Posterior cingulate gyrus (tissue), 11 donors: ENCODE measurements at regions of chr16 and their contacts with region 1.

Region 1: GRCh38 chr16:4766874-4767628 is at the start of gene ZNF500:
- DNase-seq: peak; percentile 97 to 100 (median 99)

Region 2: DNA sequence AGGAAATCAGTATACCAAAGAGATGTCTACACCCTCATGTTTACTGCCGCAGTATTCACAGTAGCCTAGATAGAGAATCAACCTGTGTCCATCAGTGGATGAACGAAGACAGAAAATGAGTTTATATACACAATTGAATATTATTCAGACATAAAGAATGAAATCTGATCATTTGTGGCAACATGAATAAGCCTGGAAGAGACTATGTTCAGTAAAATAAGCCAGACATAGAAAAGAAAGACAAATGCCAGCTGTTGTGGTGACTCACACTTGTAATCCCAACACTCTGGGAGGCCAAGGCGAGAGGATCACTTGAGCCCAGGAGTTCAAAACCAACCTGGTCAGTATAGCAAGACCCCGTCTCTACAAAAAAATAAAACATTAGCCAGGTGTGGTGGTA is 57.6 kb before region 1 on chr16:
- intact Hi-C with region 1: no loop called
- DNase-seq: peak in 1 of 10 donors; percentile 36

Region 3: GRCh38 chr16:4734063-4734729 is 32.9 kb before region 1 on chr16 and contains the starts of genes ANKS3 and DNAAF8:
- intact Hi-C with region 1: loop called (anchors 2 kb)
- DNase-seq: peak; percentile 93 to 100 (median 96)

Region 4: GRCh38 chr16:4994719-4995434 is 227.8 kb after region 1 on chr16:
- intact Hi-C with region 1: no loop called
- DNase-seq: peak; percentile 61 to 97 (median 78)